ENCODE measurements at regions of chr5 and their contacts with region 1.

Region 1: DNA sequence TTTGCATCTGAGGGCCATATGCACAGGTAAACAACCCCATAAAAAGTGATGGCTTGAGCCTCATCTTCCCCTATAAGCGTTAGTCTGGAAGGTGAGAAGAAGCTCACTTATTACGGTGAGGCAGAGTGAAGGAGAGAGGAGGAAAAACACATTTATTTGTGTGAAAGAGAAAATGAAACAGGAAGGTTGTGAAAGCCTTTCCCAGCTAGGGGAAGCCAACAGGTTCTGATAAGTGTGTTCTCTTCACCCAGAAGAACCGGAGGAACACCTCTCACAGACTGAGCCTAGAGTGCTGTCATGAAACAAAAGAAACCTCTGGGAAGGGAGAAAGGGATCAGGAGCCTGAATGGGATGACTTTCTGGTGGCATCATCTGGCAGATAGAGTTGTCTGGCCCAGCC is 192.5 kb downstream of the PTTG1 start:
- DNase-seq: no peak

Region 2: DNA sequence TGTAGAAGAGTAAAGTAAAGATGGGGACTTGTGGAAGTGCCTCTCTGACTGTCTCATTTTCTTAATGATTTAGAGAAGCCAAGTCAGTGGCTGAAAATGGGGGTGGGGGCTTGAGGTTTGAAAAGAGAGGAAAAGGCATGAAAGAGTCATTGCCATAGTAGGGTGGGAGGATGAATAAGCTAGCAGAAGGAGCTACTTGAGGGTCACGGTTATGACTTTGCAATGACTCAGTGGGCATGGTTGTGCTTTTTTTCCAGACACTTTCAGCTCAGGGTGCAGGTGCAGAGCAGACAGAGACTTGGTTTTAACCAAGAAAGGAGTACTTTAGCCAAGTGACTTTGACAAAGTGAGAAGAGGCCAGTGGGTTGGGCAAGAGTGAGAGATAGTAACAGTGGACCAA is 74.7 kb before region 1 on chr5:
- intact Hi-C with region 1: no loop called
- DNase-seq: no peak

Region 3: DNA sequence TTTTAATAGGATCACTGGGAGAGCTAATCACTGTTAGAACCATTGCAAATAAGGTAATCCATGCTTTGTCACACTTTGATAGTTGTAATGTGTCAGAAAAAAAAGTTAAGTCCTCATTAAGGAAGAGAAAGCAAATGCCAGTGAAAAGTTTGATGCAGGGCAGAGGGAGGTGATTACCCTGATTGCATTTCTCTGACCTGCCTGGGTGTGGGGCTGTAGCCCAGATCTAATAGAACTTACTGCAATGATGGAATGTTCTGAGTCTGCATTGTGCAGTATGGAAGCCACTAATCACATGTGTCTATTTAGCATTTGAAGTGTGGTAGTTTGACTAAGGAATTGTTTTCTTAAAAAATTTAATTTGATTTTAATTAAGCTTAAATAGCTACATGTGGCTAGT is 35.2 kb after region 1 on chr5:
- intact Hi-C with region 1: loop called in 1 of 2 experiments (anchors 1 kb)
- DNase-seq: no peak